ENCODE measurements at regions of chr4 and their contacts with region 1.

Region 1: DNA sequence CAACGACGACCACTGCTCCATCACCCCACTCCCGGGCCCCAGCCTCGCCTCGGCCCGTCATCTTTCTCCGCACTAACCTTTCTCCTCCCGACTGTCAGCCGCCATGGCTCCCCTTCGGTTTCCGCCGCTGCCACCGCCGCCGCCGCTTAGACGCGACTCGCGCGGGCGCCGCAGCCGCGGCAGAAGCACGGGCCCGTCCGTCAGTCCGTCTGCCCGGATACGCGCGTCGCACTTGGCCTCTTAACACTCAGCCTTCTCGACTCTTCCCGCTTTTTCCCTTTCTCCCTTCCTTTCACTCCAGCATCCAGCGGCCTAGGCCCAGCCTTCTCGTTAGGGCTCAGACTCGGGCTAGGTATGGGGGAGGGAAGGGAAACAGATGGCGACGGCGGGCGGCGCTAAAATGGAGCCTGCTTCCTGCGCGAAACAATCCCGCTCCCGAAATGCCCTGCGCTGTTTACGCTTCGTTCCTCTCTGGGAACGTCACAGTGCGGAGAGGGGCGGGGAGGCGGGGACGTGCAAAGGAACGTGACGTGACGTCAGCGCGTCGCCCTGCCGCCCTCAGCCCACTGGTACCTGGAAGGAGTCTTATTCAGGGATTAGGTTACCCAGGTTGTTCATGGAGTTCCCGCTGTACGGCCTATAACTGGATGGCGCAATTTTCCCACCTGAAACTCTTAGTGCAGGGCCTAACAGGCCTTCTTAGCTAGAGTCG is at the start of gene YTHDC1:
- DNase-seq: peak; percentile 88 to 98
- H3K4me3 ChIP-seq: peak within 1 kb of the TSS; percentile 88 to 89
- H3K27ac ChIP-seq: peak within 1 kb of the TSS; percentile 97 to 98
- H3K4me1 ChIP-seq: peaks cover 0 to 18% of the 10 kb centered on the region in 2 donors
- H3K27me3 ChIP-seq: no peaks in the 10 kb centered on the region
- CTCF ChIP-seq: no peak
- total RNA-seq, gene YTHDC1: 17.6 TPM

Region 2: GRCh38 chr4:67545199-67546003 is 804.4 kb before region 1 on chr4 and contains the start of gene CENPC:
- intact Hi-C with region 1: loop called (anchors 10 kb)
- DNase-seq: peak; percentile 87 to 98
- H3K4me3 ChIP-seq: peak within 1 kb of the TSS; percentile 71 to 91
- H3K27ac ChIP-seq: peak within 1 kb of the TSS; percentile 93 to 95
- H3K4me1 ChIP-seq: peaks cover 0 to 7% of the 10 kb centered on the region in 2 donors
- H3K27me3 ChIP-seq: no peaks in the 10 kb centered on the region
- CTCF ChIP-seq: no peak
- total RNA-seq, gene CENPC: 5.7 TPM

Region 3: GRCh38 chr4:68390205-68390935 is 40.6 kb after region 1 on chr4:
- intact Hi-C with region 1: no loop called
- DNase-seq: no peak
- H3K4me3 ChIP-seq: no peak overlapping the region
- H3K27ac ChIP-seq: no peak overlapping the region
- H3K4me1 ChIP-seq: no peaks in the 10 kb centered on the region
- H3K27me3 ChIP-seq: no peaks in the 10 kb centered on the region
- CTCF ChIP-seq: no peak

Measured in ascending aorta (tissue), 2 donors.